ENCODE measurements at regions of chr12 and their contacts with region 1.

Region 1: GRCh38 chr12:25894759-25895158 is 63.7 kb upstream of the RASSF8 start:
- DNase-seq: no peak
- H3K4me3 ChIP-seq: no peak overlapping the region
- H3K27ac ChIP-seq: no peak overlapping the region
- H3K4me1 ChIP-seq: peaks cover 3% of the 10 kb centered on the region
- H3K27me3 ChIP-seq: no peaks in the 10 kb centered on the region
- CTCF ChIP-seq: no peak

Region 2: GRCh38 chr12:25806271-25806670 is 88.5 kb before region 1 on chr12:
- CTCF ChIA-PET with region 1: no interaction called
- dilution Hi-C with region 1: no loop called
- in situ Hi-C with region 1: no loop called
- intact Hi-C with region 1: no loop called
- DNase-seq: peak; percentile 76
- H3K4me3 ChIP-seq: no peak overlapping the region
- H3K27ac ChIP-seq: no peak overlapping the region
- H3K4me1 ChIP-seq: peaks cover 15% of the 10 kb centered on the region
- H3K27me3 ChIP-seq: no peaks in the 10 kb centered on the region
- CTCF ChIP-seq: no peak

Region 3: DNA sequence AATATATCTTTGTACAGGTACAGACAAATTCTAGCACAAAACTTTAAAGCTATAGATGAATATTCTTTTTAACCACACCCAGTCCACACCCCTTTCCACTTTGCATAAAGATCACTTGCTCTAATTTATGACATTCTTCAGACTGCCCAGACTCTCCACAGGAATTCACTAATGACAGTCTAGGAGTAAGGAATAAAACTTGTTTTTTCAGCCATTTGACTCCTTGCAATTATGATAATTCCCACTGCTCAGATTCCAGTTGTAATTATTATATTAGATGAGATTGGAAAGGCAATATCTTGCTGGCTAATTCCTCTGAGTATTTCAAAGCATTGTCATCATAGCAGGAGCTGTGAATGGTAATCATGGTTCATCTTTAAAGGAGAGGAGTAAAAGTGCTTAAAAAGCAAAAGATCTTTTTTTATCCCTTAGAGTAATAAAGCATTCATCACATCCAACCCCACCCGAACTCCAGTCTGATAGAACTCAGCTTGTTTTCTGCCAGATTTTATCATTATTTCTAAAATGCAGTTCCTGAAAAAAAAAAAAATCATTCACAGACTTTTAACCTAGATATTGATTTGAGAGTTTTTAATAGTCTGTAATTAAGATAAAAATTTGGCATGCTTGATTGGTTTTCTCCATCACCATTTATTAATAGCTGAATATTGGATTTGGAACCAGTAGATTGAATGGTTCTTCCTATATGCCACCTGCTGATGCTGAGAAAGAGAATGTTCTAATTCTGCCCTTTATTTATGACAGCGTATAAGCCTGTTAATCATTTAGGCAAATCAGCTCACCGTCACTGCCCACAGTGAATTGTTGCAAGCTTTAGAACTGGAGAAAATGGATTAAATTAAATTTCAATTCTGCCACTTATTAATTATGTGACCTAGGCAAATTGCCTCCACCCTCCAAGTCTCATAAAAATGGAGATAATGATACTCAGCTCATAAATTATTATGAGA is 30.2 kb before region 1 on chr12:
- CTCF ChIA-PET with region 1: no interaction called
- dilution Hi-C with region 1: loop called (anchors 5 kb)
- in situ Hi-C with region 1: no loop called
- intact Hi-C with region 1: no loop called
- DNase-seq: no peak
- H3K4me3 ChIP-seq: no peak overlapping the region
- H3K27ac ChIP-seq: no peak overlapping the region
- H3K4me1 ChIP-seq: no peaks in the 10 kb centered on the region
- H3K27me3 ChIP-seq: no peaks in the 10 kb centered on the region
- CTCF ChIP-seq: no peak

Region 4: GRCh38 chr12:26135010-26135420 is 240.3 kb after region 1 on chr12:
- CTCF ChIA-PET with region 1: no interaction called
- dilution Hi-C with region 1: no loop called
- in situ Hi-C with region 1: no loop called
- intact Hi-C with region 1: no loop called
- DNase-seq: no peak
- H3K4me3 ChIP-seq: no peak overlapping the region
- H3K27ac ChIP-seq: no peak overlapping the region
- H3K4me1 ChIP-seq: peaks cover 14% of the 10 kb centered on the region
- H3K27me3 ChIP-seq: no peaks in the 10 kb centered on the region
- CTCF ChIP-seq: no peak

Measured in mammary epithelial cell (primary cell).